CD4-positive, alpha-beta T cell (primary cell): ENCODE measurements at regions of chr6 and their contacts with region 1.

Region 1: DNA sequence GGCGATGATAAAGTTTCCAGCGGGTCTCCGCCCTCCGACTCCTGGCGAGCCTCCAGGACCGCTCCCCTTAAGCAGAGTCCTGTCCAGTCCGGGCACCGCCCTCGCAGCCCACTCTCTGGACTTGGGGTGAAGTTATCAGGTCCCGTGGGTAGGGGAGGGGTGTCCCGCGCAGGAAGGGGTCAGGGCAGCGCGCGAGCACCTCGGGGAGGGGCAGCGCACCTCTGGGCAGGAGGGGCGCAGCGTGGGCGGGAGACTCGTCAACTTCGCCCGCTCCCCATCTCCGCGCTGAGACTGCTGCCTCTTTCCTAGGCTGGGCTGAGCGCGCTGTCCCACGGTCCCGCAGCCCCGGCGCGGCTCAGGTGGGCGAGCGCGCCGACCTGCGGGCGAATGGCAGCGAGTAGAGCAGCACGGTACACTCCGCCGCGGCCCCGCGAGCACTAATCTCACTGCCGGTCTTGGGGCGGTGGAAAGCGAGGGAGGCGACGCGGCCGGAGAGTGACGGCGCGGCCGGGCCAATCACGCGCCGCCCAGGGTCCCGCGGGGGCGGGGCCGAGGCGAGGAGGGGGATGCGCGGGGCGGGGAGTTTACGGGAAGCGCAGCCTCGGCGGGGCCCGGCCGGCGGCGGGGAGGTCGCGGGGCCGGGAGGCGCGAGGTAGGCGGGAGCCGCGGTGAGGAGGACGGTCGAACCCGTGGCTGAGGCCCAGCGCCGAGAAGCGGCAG is at the start of gene MAN1A1:
- DNase-seq: peak; percentile 74 to 95 (median 86)
- ATAC-seq: peak; percentile 86
- H3K4me3 ChIP-seq: peak within 1 kb of the TSS; percentile 96
- H3K4me3 Mint-ChIP-seq: peak within 1 kb of the TSS; percentile 89
- H3K27ac ChIP-seq: peak within 1 kb of the TSS; percentile 67 to 84
- H3K27ac Mint-ChIP-seq: peak within 1 kb of the TSS; percentile 85
- H3K4me1 ChIP-seq: peaks cover 20% of the 10 kb centered on the region
- H3K4me1 Mint-ChIP-seq: peaks cover 65% of the 10 kb centered on the region
- H3K27me3 ChIP-seq: no peaks in the 10 kb centered on the region
- H3K27me3 Mint-ChIP-seq: no peaks in the 10 kb centered on the region
- CTCF ChIP-seq: no peak
- total RNA-seq, gene MAN1A1: 4.5 to 4.9 TPM

Region 2: DNA sequence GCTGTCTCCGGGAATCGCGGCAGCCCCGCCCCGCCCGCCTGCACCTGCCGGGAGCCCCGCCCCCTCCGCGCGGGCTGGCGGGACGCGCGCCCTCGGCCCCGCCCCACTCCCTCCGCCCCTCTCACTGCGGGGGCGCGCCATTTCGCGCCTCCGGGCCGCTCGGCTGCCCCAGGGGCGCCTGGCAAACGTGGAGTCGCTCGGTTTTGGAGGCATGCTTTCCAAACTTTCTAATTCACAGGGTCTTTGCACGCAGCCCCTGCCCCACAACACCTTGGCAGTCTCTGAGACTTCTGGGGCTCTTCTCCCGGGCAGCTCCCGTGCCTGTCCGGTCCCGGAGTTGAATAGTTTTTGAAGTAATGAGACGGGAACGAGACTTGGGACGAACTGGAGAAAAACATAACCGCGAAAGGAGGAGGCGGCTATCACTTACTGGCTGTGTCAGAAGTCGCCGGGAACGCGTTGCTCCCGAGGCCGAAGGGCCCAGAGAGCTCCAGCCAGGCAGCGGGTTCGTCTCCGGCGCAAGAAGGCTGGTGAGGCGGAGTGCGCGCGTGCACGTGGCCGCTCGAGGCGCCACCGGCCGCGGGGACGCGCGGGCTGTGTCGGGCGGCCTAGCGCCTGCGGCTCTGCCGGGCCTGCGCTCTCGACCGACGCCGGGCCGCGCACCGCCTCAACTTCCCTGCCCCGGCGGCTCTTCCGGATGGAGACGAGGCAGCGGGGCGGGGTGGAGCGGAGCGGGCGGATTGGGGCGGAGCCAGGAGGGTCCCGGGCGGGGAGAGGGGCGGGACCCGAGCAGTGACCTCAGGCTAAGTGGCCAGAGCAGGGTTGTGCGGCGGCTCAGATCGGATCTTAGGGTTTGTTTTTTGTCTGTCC is 414.8 kb before region 1 on chr6 and contains the start of gene MCM9:
- CTCF ChIA-PET with region 1: no interaction called
- POLR2A ChIA-PET with region 1: interaction called, 3 read pairs
- intact Hi-C with region 1: loop called in 1 of 2 experiments (anchors 10 kb)
- DNase-seq: peak; percentile 71 to 96 (median 84)
- ATAC-seq: peak; percentile 88
- H3K4me3 ChIP-seq: peak within 1 kb of the TSS; percentile 92
- H3K4me3 Mint-ChIP-seq: peak within 1 kb of the TSS; percentile 91
- H3K27ac ChIP-seq: peak within 1 kb of the TSS; percentile 79 to 88
- H3K27ac Mint-ChIP-seq: peak within 1 kb of the TSS; percentile 88
- H3K4me1 ChIP-seq: peaks cover 19% of the 10 kb centered on the region
- H3K4me1 Mint-ChIP-seq: peaks cover 53% of the 10 kb centered on the region
- H3K27me3 ChIP-seq: no peaks in the 10 kb centered on the region
- H3K27me3 Mint-ChIP-seq: no peaks in the 10 kb centered on the region
- CTCF ChIP-seq: no peak
- total RNA-seq, gene MCM9: 25.5 TPM

Region 3: DNA sequence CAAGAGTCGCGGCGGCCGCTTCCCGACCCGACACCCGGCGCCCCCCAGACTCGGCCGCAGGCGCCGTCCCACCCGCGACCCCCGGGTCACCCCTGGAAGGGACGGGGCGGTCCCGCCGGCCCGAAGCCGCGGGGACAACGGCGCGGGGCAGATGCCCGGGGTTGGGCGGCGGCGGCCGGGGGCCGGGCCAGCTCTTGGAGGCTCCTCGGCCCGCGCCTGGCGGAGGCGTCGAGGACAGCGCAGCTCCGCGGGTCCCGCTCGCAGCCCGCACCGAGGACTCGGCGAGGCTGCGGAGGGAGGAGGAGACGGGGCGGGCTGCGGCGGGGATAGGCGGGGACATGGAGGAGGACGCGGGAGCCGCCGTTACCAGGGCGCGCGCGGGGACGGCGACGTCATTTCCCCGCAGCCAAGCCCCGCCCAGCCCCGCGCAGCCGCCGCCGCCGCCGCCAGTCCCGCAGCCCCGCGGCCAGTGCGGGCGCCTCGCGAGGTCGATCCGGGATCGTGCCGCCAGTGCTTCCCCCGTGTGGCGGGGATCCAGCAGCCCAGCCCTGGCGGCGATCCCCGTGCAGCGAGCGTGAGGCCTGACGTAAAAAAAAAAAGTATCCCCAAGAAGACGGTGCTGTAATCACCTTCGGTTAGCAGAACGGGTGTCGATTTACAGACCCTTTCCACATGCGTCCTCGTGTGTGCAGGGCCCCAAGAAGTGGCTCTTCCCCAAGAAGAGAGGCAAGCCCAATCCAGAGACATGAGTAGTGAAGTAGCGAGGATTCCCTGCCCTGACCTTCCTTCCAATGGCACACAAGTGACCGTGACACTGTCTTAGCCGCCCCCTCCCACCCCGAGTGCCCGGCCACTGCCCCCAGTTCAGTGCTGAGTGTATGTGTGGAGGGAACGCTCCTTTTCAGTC is 270.9 kb before region 1 on chr6 and contains the start of gene FAM184A:
- CTCF ChIA-PET with region 1: no interaction called
- POLR2A ChIA-PET with region 1: interaction called, 4 read pairs
- intact Hi-C with region 1: loop called in 1 of 2 experiments (anchors 2 kb)
- DNase-seq: peak; percentile 51 to 92 (median 71)
- ATAC-seq: peak; percentile 75
- H3K4me3 ChIP-seq: peak within 1 kb of the TSS; percentile 65
- H3K4me3 Mint-ChIP-seq: peak within 1 kb of the TSS; percentile 91
- H3K27ac ChIP-seq: peak within 1 kb of the TSS; percentile 53 to 58
- H3K27ac Mint-ChIP-seq: peak within 1 kb of the TSS; percentile 90
- H3K4me1 ChIP-seq: peaks cover 25% of the 10 kb centered on the region
- H3K4me1 Mint-ChIP-seq: peaks cover 40% of the 10 kb centered on the region
- H3K27me3 ChIP-seq: no peaks in the 10 kb centered on the region
- H3K27me3 Mint-ChIP-seq: no peaks in the 10 kb centered on the region
- CTCF ChIP-seq: no peak
- total RNA-seq, gene FAM184A: 2.9 to 3.3 TPM

Region 4: GRCh38 chr6:119313937-119314884 is 35.3 kb before region 1 on chr6:
- CTCF ChIA-PET with region 1: interaction called, 3 read pairs
- POLR2A ChIA-PET with region 1: interaction called, 26 read pairs
- intact Hi-C with region 1: no loop called
- DNase-seq: peak in 5 of 14 experiments; percentile 6 to 71 (median 59)
- ATAC-seq: peak; percentile 68
- H3K4me3 ChIP-seq: no peak overlapping the region
- H3K4me3 Mint-ChIP-seq: peak overlapping the region; percentile 49
- H3K27ac ChIP-seq: peak overlapping the region; percentile 0 to 71
- H3K27ac Mint-ChIP-seq: peak overlapping the region; percentile 82
- H3K4me1 ChIP-seq: peaks cover 34% of the 10 kb centered on the region
- H3K4me1 Mint-ChIP-seq: peaks cover 42% of the 10 kb centered on the region
- H3K27me3 ChIP-seq: no peaks in the 10 kb centered on the region
- H3K27me3 Mint-ChIP-seq: no peaks in the 10 kb centered on the region
- CTCF ChIP-seq: no peak

Region 5: GRCh38 chr6:119333707-119334295 is 15.7 kb before region 1 on chr6:
- CTCF ChIA-PET with region 1: interaction called, 9 read pairs
- POLR2A ChIA-PET with region 1: interaction called, 19 read pairs
- intact Hi-C with region 1: loop called in 1 of 2 experiments (anchors 2 kb)
- DNase-seq: peak in 3 of 14 experiments; percentile 55 to 65 (median 60)
- ATAC-seq: peak; percentile 75
- H3K4me3 ChIP-seq: no peak overlapping the region
- H3K4me3 Mint-ChIP-seq: no peak overlapping the region
- H3K27ac ChIP-seq: no peak overlapping the region
- H3K27ac Mint-ChIP-seq: no peak overlapping the region
- H3K4me1 ChIP-seq: peaks cover 13% of the 10 kb centered on the region
- H3K4me1 Mint-ChIP-seq: peaks cover 5% of the 10 kb centered on the region
- H3K27me3 ChIP-seq: no peaks in the 10 kb centered on the region
- H3K27me3 Mint-ChIP-seq: no peaks in the 10 kb centered on the region
- CTCF ChIP-seq: peak; percentile 81

Region 6: GRCh38 chr6:121305957-121306607 is 1956.6 kb after region 1 on chr6:
- CTCF ChIA-PET with region 1: no interaction called
- POLR2A ChIA-PET with region 1: no interaction called
- intact Hi-C with region 1: loop called in 1 of 2 experiments (anchors 10 kb)
- DNase-seq: peak in 3 of 14 experiments; percentile 22 to 38 (median 26)
- ATAC-seq: peak; percentile 64
- H3K4me3 ChIP-seq: no peak overlapping the region
- H3K4me3 Mint-ChIP-seq: no peak overlapping the region
- H3K27ac ChIP-seq: no peak overlapping the region
- H3K27ac Mint-ChIP-seq: no peak overlapping the region
- H3K4me1 ChIP-seq: no peaks in the 10 kb centered on the region
- H3K4me1 Mint-ChIP-seq: no peaks in the 10 kb centered on the region
- H3K27me3 ChIP-seq: no peaks in the 10 kb centered on the region
- H3K27me3 Mint-ChIP-seq: no peaks in the 10 kb centered on the region
- CTCF ChIP-seq: peak; percentile 54

Region 7: GRCh38 chr6:121334299-121335086 is 1985.0 kb after region 1 on chr6 and contains the start of gene TBC1D32:
- CTCF ChIA-PET with region 1: no interaction called
- POLR2A ChIA-PET with region 1: no interaction called
- intact Hi-C with region 1: loop called in 1 of 2 experiments (anchors 10 kb)
- DNase-seq: peak; percentile 73 to 92 (median 82)
- ATAC-seq: peak; percentile 84
- H3K4me3 ChIP-seq: peak within 1 kb of the TSS; percentile 83
- H3K4me3 Mint-ChIP-seq: peak within 1 kb of the TSS; percentile 97
- H3K27ac ChIP-seq: peak within 1 kb of the TSS; percentile 94 to 99
- H3K27ac Mint-ChIP-seq: peak within 1 kb of the TSS; percentile 98
- H3K4me1 ChIP-seq: peaks cover 15% of the 10 kb centered on the region
- H3K4me1 Mint-ChIP-seq: peaks cover 44% of the 10 kb centered on the region
- H3K27me3 ChIP-seq: no peaks in the 10 kb centered on the region
- H3K27me3 Mint-ChIP-seq: no peaks in the 10 kb centered on the region
- CTCF ChIP-seq: no peak
- total RNA-seq, gene TBC1D32: 9.4 to 9.8 TPM